ENCODE measurements at regions of chr4 and their contacts with region 1.

Region 1: DNA sequence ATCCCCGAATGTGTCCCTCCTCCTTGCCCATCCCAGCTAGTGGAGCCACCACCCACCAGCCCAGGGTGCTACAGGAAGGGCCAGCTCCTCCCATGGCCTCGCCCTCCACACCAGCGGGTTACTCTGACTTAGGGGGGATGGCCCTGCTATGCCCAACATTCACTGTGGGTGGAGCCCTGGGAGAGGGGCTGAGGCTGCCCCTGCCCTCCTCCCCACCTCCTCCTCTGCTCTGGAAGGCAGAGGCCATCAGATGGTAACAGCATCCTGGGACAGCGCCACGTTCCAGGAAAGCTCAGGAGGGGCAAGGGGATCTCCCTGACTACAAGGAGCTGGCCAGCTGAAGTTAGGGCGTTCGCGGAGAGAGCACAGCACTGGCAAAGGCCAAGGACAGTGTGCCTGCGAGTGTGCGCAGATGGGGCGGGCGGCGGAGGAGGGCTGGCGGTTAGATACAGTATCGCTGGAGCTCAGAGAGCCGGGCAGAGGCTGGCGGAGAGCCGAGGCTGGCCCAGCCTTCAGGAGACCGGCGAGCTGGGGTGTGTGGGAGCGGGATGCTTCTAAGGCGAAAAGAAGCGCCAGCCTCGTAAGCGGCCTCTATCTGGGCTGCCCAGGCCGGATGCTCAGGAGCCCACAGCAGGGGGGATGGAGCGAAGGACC is 1.5 kb downstream of the JAKMIP1 start:
- DNase-seq: no peak
- H3K4me3 Mint-ChIP-seq: peak overlapping the region; percentile 87
- H3K27ac Mint-ChIP-seq: peak overlapping the region; percentile 83
- H3K4me1 Mint-ChIP-seq: peaks cover 46% of the 10 kb centered on the region
- H3K27me3 Mint-ChIP-seq: peaks cover 12% of the 10 kb centered on the region

Region 2: GRCh38 chr4:6134612-6135220 is 64.2 kb before region 1 on chr4:
- intact Hi-C with region 1: loop called (anchors 1 kb)
- DNase-seq: peak; percentile 46
- H3K4me3 Mint-ChIP-seq: no peak overlapping the region
- H3K27ac Mint-ChIP-seq: no peak overlapping the region
- H3K4me1 Mint-ChIP-seq: peaks cover 20% of the 10 kb centered on the region
- H3K27me3 Mint-ChIP-seq: no peaks in the 10 kb centered on the region

Region 3: GRCh38 chr4:6188687-6189305 is 10.1 kb before region 1 on chr4:
- intact Hi-C with region 1: loop called (anchors 1 kb)
- DNase-seq: no peak
- H3K4me3 Mint-ChIP-seq: no peak overlapping the region
- H3K27ac Mint-ChIP-seq: no peak overlapping the region
- H3K4me1 Mint-ChIP-seq: peaks cover 88% of the 10 kb centered on the region
- H3K27me3 Mint-ChIP-seq: no peaks in the 10 kb centered on the region

Region 4: GRCh38 chr4:6269616-6270511 is 71.0 kb after region 1 on chr4 and contains the start of gene WFS1:
- intact Hi-C with region 1: loop called (anchors 5 kb)
- DNase-seq: peak; percentile 96
- H3K4me3 Mint-ChIP-seq: peak within 1 kb of the TSS; percentile 81
- H3K27ac Mint-ChIP-seq: no peak within 1 kb of the TSS
- H3K4me1 Mint-ChIP-seq: peaks cover 18% of the 10 kb centered on the region
- H3K27me3 Mint-ChIP-seq: peaks cover 34% of the 10 kb centered on the region
- total RNA-seq, gene WFS1: 5.7 and 9.3 TPM in 2 replicates

Region 5: GRCh38 chr4:6390356-6390755 is 191.5 kb after region 1 on chr4:
- intact Hi-C with region 1: no loop called
- DNase-seq: no peak
- H3K4me3 Mint-ChIP-seq: no peak overlapping the region
- H3K27ac Mint-ChIP-seq: no peak overlapping the region
- H3K4me1 Mint-ChIP-seq: no peaks in the 10 kb centered on the region
- H3K27me3 Mint-ChIP-seq: peaks cover 4% of the 10 kb centered on the region

Region 6: DNA sequence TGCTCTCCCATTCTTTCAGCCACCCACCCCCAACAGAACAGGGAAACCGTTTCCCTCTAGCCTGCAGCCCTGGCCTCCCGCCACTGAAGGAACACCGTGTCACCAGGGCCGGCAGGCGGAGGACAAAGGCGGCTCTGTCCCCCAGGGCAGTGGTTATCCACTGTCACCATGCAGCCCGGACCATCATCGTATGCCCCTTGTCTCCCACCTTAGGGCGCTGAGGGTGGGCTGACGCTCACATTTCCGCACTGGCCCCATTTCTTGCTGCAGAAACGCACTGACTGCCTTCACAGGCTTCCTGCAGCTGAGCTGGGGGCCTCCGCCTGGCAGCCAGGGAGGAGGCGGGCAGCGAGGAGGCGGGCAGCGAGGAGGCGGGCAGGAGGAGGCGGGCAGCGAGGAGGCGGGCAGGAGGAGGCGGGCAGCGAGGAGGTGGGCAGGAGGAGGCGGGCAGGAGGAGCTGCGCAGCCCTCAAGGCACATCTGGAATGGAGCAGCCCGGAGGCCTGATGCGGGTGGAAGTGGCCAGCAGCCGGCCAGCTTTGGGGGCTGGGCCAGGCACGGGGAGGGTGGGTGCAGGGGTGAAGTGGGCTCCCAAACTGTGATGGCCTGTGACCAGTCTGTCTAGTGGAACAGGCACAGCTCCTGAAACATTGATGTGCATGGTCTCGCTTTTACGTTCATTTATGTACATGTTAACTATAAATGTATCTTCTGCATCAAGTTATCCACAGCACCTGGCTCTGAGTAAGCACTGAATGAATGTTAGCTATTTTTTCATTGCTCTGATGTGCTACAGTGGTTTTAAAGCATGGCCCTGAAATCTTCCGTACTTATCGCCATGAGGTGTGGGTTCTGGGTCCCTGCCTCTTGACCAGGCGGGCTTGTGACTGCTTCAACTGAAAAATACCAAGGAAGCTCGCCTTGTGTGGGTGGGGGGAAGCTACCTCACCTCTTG is 563.0 kb after region 1 on chr4:
- intact Hi-C with region 1: no loop called
- DNase-seq: no peak
- H3K4me3 Mint-ChIP-seq: no peak overlapping the region
- H3K27ac Mint-ChIP-seq: no peak overlapping the region
- H3K4me1 Mint-ChIP-seq: no peaks in the 10 kb centered on the region
- H3K27me3 Mint-ChIP-seq: peaks cover 9% of the 10 kb centered on the region